Endothelial cell of umbilical vein (primary cell): ENCODE measurements at regions of chr11 and their contacts with region 1.

Region 1: GRCh38 chr11:25981998-25982397 is 349.9 kb upstream of the ANO3 start:
- DNase-seq: peak; percentile 72
- H3K4me3 ChIP-seq: no peak overlapping the region
- H3K27ac ChIP-seq: no peak overlapping the region
- H3K4me1 ChIP-seq: no peaks in the 10 kb centered on the region
- H3K27me3 ChIP-seq: no peaks in the 10 kb centered on the region
- CTCF ChIP-seq: peak; percentile 32 to 38
- POLR2A ChIP-seq: no peak

Region 2: GRCh38 chr11:25970726-25971508 is 11.1 kb before region 1 on chr11:
- CTCF ChIA-PET with region 1: interaction called, 21 read pairs
- POLR2A ChIA-PET with region 1: no interaction called
- dilution Hi-C with region 1: no loop called
- intact Hi-C with region 1: no loop called
- DNase-seq: no peak
- H3K4me3 ChIP-seq: no peak overlapping the region
- H3K27ac ChIP-seq: no peak overlapping the region
- H3K4me1 ChIP-seq: no peaks in the 10 kb centered on the region
- H3K27me3 ChIP-seq: no peaks in the 10 kb centered on the region
- CTCF ChIP-seq: peak in 1 of 2 donors; percentile 13
- POLR2A ChIP-seq: no peak

Region 3: DNA sequence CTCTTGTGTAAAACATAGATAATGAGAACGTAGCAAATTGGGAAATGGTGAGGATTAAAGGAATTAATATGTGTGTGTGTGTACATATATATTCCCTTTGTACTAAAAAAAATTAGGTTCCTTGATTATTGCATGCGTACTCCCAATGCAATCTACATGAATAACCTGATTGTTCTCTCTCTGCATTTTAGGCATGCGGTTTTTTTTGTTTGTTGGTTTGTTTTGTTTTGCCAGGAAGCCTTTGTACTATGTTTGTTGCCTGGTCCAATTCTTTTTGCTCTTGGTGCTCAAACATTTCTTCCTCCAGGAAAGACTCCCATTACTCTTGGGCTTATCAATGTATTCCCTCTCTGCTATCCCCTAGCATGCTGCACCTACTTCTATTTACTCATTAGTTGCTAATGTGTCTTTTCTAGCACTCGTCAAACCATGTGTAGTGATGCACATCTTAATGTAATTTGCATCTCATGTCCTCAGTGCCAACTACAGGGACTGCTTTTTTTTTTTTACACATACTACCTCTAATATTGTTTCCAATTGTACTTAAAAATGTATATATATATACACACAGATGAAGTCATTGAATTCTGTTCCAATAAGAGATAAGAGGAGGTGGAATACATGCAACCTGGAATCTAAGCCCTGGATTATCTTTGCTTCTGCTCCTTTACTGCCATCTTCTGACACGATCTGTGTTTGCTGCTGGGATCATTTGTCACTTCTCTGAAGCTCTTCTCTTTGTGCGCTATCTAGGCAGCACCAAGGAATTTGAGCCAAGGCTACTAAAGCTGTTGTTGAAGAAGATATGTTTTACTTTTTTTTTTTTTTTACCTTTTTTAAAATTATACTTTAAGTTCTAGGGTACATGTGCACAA is 152.7 kb after region 1 on chr11:
- CTCF ChIA-PET with region 1: interaction called, 77 read pairs
- POLR2A ChIA-PET with region 1: no interaction called
- dilution Hi-C with region 1: no loop called
- intact Hi-C with region 1: loop called (anchors 1 kb)
- DNase-seq: peak; percentile 7
- H3K4me3 ChIP-seq: no peak overlapping the region
- H3K27ac ChIP-seq: no peak overlapping the region
- H3K4me1 ChIP-seq: no peaks in the 10 kb centered on the region
- H3K27me3 ChIP-seq: no peaks in the 10 kb centered on the region
- CTCF ChIP-seq: no peak
- POLR2A ChIP-seq: no peak

Region 4: DNA sequence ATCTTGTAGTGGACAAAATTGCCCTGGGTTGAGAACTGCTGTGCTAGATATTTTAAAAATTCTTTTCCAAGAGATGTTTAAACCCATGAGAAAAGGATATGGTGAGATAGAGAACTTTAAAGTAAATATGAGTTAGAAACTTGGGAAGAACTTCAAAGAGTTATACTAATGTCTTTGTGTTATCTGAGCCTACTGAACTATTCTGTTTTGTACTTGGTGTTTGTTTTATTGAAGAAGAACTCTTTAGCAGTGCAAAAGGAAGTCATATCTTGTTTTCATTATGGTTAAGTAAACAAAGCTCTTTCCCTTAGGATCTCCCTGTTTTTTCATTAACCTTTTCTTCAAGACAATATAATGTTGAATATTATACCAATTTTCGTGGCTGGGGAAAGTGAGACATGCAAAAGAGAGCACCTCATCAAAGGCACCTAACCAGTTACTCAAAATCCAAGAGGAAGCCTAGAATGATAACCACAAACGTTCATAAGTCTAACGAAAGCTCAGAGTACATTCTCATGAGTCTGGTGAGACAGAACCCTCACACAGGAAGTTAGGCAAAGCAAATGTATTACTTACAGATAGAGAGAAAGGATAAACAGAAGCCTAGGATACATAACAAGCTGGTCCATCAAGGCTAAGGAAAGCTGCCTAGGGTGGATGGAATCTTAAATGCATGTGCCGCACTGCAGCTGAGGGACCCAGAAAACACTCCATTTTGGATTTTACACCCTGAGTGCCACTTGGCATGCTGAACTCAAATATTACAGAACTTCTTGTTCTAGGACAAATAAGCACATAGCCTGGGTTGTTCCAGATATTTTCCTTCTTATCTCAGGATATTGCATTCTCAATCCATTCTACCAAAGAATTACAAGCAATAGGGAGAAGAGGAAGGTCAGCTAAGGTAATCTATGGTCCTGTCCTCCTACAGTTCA is 237.5 kb after region 1 on chr11:
- CTCF ChIA-PET with region 1: interaction called, 55 read pairs
- POLR2A ChIA-PET with region 1: no interaction called
- dilution Hi-C with region 1: no loop called
- intact Hi-C with region 1: no loop called
- DNase-seq: peak; percentile 23
- H3K4me3 ChIP-seq: no peak overlapping the region
- H3K27ac ChIP-seq: no peak overlapping the region
- H3K4me1 ChIP-seq: peaks cover 10% of the 10 kb centered on the region
- H3K27me3 ChIP-seq: no peaks in the 10 kb centered on the region
- CTCF ChIP-seq: no peak
- POLR2A ChIP-seq: no peak

Region 5: DNA sequence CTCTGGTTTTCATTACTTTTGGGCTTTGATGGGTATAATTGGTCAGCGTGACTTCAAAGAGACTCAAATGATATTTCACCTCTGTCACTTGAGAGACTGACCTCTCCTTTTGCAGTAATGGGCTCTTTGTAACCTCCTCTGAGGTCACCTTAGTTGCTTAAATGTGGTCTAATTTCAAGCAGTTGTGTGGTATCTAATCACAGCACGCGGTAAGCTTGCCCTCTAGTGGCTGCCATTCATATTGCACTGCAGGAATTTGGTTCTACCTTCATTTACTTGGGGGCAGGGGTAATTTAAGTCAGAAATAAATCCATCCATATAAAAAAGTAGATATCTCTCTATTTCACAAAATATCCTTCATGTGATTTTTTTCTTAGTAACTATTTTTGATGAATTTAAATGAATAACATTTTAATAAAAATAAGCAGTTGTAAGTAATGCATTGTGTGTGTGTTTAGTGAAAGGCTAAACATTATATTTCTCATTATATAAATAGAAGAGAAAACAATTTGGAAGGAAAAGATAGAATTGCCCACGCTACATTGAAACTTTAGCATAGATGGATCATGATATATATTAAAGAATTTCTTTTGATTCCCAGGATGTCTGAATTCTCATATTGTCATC is 294.9 kb after region 1 on chr11:
- CTCF ChIA-PET with region 1: interaction called, 95 read pairs
- POLR2A ChIA-PET with region 1: no interaction called
- dilution Hi-C with region 1: no loop called
- intact Hi-C with region 1: loop called (anchors 1 kb)
- DNase-seq: peak; percentile 87
- H3K4me3 ChIP-seq: no peak overlapping the region
- H3K27ac ChIP-seq: no peak overlapping the region
- H3K4me1 ChIP-seq: peaks cover 3% of the 10 kb centered on the region
- H3K27me3 ChIP-seq: no peaks in the 10 kb centered on the region
- CTCF ChIP-seq: peak; percentile 82 to 89
- POLR2A ChIP-seq: no peak

Region 6: GRCh38 chr11:26651916-26652315 is 669.9 kb after region 1 on chr11:
- CTCF ChIA-PET with region 1: no interaction called
- POLR2A ChIA-PET with region 1: no interaction called
- dilution Hi-C with region 1: no loop called
- intact Hi-C with region 1: no loop called
- DNase-seq: no peak
- H3K4me3 ChIP-seq: no peak overlapping the region
- H3K27ac ChIP-seq: no peak overlapping the region
- H3K4me1 ChIP-seq: no peaks in the 10 kb centered on the region
- H3K27me3 ChIP-seq: no peaks in the 10 kb centered on the region
- CTCF ChIP-seq: no peak
- POLR2A ChIP-seq: no peak

Region 7: GRCh38 chr11:27158722-27159679 is 1177.0 kb after region 1 on chr11:
- CTCF ChIA-PET with region 1: interaction called, 23 read pairs
- POLR2A ChIA-PET with region 1: no interaction called
- dilution Hi-C with region 1: no loop called
- intact Hi-C with region 1: no loop called
- DNase-seq: peak; percentile 70
- H3K4me3 ChIP-seq: no peak overlapping the region
- H3K27ac ChIP-seq: no peak overlapping the region
- H3K4me1 ChIP-seq: no peaks in the 10 kb centered on the region
- H3K27me3 ChIP-seq: no peaks in the 10 kb centered on the region
- CTCF ChIP-seq: peak; percentile 54 to 70
- POLR2A ChIP-seq: no peak